ENCODE measurements at regions of chr7 and their contacts with region 1.

Region 1: DNA sequence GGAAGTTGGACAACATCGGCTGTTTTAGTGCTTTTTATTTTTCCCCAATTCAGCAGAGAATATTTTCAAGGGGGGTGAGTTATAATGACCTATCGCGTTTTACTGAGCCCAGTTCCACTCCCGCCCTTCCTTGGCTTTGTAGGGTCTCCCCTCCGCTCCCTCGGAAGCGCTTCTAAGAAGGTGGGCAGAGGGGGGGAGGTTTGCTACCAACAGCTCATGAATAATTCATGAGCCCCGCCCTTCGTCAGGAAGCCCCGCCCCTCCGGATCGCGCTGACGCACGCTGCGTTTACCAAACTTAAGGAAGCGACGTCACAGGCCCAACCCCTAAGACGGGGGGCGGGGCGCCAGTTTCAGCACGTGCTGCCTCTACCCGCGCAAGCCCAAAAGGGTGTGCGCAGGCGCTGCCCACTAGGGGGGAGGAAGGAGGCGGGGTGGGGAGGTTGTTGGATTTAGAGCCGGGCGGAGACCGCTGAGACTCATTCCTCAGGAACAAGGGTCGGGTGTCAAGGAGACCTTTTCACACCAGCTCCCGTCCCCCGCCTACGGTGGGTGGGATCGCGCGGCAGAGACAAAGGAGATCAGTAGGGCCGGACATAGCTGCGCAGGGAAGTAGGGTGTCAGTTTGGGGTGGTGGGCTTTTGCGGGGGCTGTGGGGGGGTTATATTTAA is 529 bp upstream of the MEPCE start:
- DNase-seq: peak; percentile 100
- ATAC-seq: peak; percentile 64
- H3K4me3 ChIP-seq: peak overlapping the region; percentile 69 to 96
- H3K4me3 Mint-ChIP-seq: peak overlapping the region; percentile 100
- H3K27ac ChIP-seq: peak overlapping the region; percentile 99 to 100
- H3K27ac Mint-ChIP-seq: peak overlapping the region; percentile 100
- H3K4me1 ChIP-seq: peaks cover 34% of the 10 kb centered on the region
- H3K4me1 Mint-ChIP-seq: peaks cover 42% of the 10 kb centered on the region
- H3K27me3 ChIP-seq: no peaks in the 10 kb centered on the region
- H3K27me3 Mint-ChIP-seq: no peaks in the 10 kb centered on the region
- CTCF ChIP-seq: no peak

Region 2: DNA sequence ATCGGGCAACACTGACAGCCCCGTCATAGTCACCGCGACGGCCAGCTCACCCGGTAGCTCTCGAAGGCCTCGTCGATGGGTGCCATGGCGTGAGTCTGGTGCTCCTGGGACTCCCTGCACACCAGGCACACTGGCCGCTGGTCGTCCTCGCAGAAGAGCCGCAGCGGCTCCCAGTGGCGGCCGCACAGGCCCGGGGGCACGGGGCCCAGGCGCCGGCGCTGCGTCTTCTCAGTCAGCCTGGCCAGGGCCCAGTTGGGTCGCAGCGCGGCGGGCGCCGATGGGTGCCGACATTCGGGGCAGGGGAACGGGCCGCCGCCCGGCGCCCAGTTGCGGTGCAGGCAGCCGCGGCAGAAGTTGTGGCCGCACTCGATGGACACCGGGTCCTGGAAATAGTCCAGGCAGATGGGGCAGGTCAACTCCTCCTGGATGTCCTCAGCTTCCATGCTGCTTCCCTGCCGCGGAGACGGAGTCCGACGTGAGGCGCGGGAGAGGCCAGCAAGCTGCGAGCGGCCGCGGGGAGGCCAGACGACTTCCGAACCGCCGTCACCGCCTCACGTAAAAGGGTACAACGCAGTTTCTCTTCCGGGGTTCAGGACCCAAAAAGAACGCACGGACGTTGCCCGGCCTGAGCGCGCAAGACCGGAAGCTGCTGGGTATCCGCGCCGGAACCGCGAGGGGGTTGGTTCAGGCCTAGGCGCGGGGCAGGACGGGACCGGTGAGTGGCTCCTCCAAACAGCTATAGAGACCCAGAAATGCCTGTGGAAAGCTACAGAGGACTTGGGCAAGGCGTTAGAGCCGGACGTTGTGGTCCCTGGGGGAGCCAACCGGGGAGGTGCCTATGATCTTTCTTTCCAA is 509.9 kb before region 1 on chr7 and contains the start of gene TRIM4:
- CTCF ChIA-PET with region 1: no interaction called
- POLR2A ChIA-PET with region 1: interaction called, 3 read pairs
- intact Hi-C with region 1: loop called in 1 of 2 experiments (anchors 1 kb)
- DNase-seq: peak; percentile 74 to 95 (median 89)
- ATAC-seq: peak; percentile 95
- H3K4me3 ChIP-seq: peak within 1 kb of the TSS; percentile 65 to 93
- H3K4me3 Mint-ChIP-seq: peak within 1 kb of the TSS; percentile 92
- H3K27ac ChIP-seq: peak within 1 kb of the TSS; percentile 95 to 97
- H3K27ac Mint-ChIP-seq: peak within 1 kb of the TSS; percentile 98
- H3K4me1 ChIP-seq: peaks cover 43% of the 10 kb centered on the region
- H3K4me1 Mint-ChIP-seq: peaks cover 52% of the 10 kb centered on the region
- H3K27me3 ChIP-seq: no peaks in the 10 kb centered on the region
- H3K27me3 Mint-ChIP-seq: no peaks in the 10 kb centered on the region
- CTCF ChIP-seq: no peak
- total RNA-seq, gene TRIM4: 22.5 to 24.9 TPM

Region 3: GRCh38 chr7:100126931-100127865 is 301.9 kb before region 1 on chr7 and contains the start of gene MBLAC1:
- CTCF ChIA-PET with region 1: no interaction called
- POLR2A ChIA-PET with region 1: interaction called, 3 read pairs
- intact Hi-C with region 1: loop called in 1 of 2 experiments (anchors 10 kb)
- DNase-seq: peak; percentile 83 to 97 (median 93)
- ATAC-seq: peak; percentile 83
- H3K4me3 ChIP-seq: peak within 1 kb of the TSS; percentile 81 to 99
- H3K4me3 Mint-ChIP-seq: peak within 1 kb of the TSS; percentile 100
- H3K27ac ChIP-seq: peak within 1 kb of the TSS; percentile 92 to 98
- H3K27ac Mint-ChIP-seq: peak within 1 kb of the TSS; percentile 100
- H3K4me1 ChIP-seq: peaks cover 24% of the 10 kb centered on the region
- H3K4me1 Mint-ChIP-seq: peaks cover 39% of the 10 kb centered on the region
- H3K27me3 ChIP-seq: no peaks in the 10 kb centered on the region
- H3K27me3 Mint-ChIP-seq: no peaks in the 10 kb centered on the region
- CTCF ChIP-seq: no peak
- total RNA-seq, gene MBLAC1: 4.2 to 4.6 TPM

Region 4: DNA sequence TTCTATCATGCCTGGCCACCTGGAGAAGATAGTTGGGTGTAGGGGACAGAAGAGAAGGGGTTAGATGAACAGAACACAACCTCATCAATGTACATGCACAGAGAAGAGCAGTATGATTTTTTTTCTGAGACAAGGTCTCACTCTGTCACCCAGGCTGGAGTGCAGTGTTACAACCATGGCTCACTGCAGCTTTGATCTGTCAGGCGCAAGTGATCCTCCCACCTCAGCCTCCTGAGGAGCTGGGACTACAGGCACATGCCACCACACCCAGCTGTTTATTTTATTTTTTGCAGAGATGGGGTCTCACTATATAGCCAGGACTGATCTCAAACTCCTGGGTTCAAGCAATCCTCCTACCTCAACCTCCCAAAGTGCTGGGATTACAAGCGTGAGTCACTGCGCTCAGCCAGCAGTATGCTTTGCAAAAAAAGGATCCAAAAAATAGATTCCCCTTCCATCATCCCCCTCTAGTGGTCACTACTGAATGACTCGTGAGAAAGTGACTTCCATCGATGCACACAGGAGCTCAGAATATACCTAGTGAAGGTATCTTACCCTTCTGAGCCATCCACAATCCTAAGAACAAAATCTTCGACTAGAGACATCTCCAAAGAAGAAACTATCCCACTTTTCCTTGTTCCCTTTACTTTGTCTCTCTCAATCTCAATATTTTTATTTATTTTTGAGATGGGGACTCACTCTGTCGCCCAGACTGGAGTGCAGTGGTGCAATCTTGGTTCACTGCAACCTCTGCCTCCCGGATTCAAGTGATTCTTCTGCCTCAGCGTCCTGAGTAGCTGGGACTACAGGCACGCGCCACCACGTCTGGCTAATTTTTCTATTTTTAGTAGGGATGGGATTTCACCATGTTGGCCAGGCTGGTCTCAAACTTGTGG is 21.6 kb before region 1 on chr7:
- CTCF ChIA-PET with region 1: interaction called, 3 read pairs
- POLR2A ChIA-PET with region 1: interaction called, 17 read pairs
- intact Hi-C with region 1: no loop called
- DNase-seq: peak in 6 of 9 experiments; percentile 9 to 84 (median 38)
- ATAC-seq: peak; percentile 99
- H3K4me3 ChIP-seq: no peak overlapping the region
- H3K4me3 Mint-ChIP-seq: no peak overlapping the region
- H3K27ac ChIP-seq: no peak overlapping the region
- H3K27ac Mint-ChIP-seq: no peak overlapping the region
- H3K4me1 ChIP-seq: no peaks in the 10 kb centered on the region
- H3K4me1 Mint-ChIP-seq: peaks cover 6% of the 10 kb centered on the region
- H3K27me3 ChIP-seq: no peaks in the 10 kb centered on the region
- H3K27me3 Mint-ChIP-seq: no peaks in the 10 kb centered on the region
- CTCF ChIP-seq: peak; percentile 77

Region 5: DNA sequence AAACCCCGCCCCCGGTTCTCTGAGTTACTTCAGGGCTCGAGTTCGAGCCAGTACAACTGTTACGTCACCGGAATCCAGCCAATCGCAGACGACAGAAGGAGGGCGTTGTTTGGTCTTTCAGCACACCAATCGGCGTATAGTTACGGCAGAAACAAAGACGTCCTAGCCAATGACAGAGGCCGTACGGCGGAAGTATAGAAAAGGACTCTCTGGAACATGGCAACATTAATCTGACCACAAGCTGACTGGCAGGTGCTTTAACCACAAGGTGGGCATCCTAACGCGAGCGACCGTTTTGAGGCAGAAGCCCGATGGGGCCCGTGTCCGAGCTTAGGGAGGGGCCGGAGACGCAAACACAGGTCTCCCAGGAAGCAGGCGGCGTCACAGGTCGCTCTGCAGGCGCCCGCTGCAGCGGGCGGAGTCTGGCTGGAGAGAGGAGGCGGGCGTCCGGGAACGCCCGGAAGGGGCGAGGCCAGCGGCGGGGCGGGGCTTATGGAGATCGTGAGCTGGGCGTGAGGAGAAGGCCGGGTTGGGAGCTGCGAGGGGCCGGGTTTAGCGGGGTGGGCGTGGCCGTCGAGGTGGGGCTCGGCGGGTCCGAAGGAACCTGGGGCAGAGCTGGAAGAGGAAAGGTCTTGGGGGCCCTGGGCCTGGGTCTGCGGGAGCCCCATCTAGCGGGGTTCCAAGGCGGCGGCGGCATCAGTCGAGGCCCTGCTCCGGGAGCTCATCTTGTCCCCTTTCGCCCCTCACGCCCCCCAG is 183.1 kb after region 1 on chr7 and contains the start of gene MOSPD3:
- CTCF ChIA-PET with region 1: no interaction called
- POLR2A ChIA-PET with region 1: interaction called, 9 read pairs
- intact Hi-C with region 1: loop called (anchors 1 to 2 kb)
- DNase-seq: peak; percentile 96 to 100 (median 98)
- ATAC-seq: peak; percentile 89
- H3K4me3 ChIP-seq: peak within 1 kb of the TSS; percentile 68 to 96
- H3K4me3 Mint-ChIP-seq: peak within 1 kb of the TSS; percentile 99
- H3K27ac ChIP-seq: peak within 1 kb of the TSS; percentile 93 to 98
- H3K27ac Mint-ChIP-seq: peak within 1 kb of the TSS; percentile 100
- H3K4me1 ChIP-seq: peaks cover 19% of the 10 kb centered on the region
- H3K4me1 Mint-ChIP-seq: peaks cover 24% of the 10 kb centered on the region
- H3K27me3 ChIP-seq: no peaks in the 10 kb centered on the region
- H3K27me3 Mint-ChIP-seq: no peaks in the 10 kb centered on the region
- CTCF ChIP-seq: no peak
- total RNA-seq, gene MOSPD3: 10.3 to 10.5 TPM

Region 6: GRCh38 chr7:100874577-100875355 is 445.7 kb after region 1 on chr7 and contains the start of gene SRRT:
- CTCF ChIA-PET with region 1: no interaction called
- POLR2A ChIA-PET with region 1: interaction called, 9 read pairs
- intact Hi-C with region 1: loop called (anchors 5 to 10 kb)
- DNase-seq: peak; percentile 97 to 99 (median 98)
- ATAC-seq: peak; percentile 97
- H3K4me3 ChIP-seq: peak within 1 kb of the TSS; percentile 75 to 94
- H3K4me3 Mint-ChIP-seq: peak within 1 kb of the TSS; percentile 98
- H3K27ac ChIP-seq: peak within 1 kb of the TSS; percentile 93 to 96
- H3K27ac Mint-ChIP-seq: peak within 1 kb of the TSS; percentile 99
- H3K4me1 ChIP-seq: peaks cover 41% of the 10 kb centered on the region
- H3K4me1 Mint-ChIP-seq: peaks cover 43% of the 10 kb centered on the region
- H3K27me3 ChIP-seq: no peaks in the 10 kb centered on the region
- H3K27me3 Mint-ChIP-seq: no peaks in the 10 kb centered on the region
- CTCF ChIP-seq: no peak
- total RNA-seq, gene SRRT: 491 to 496 TPM

Measured in CD8-positive, alpha-beta T cell (primary cell).